ENCODE measurements at regions of chr16 and their contacts with region 1.

Region 1: GRCh38 chr16:2500918-2501750 is 12.6 kb upstream of the ATP6V0C start:
- DNase-seq: peak; percentile 85 to 87
- ATAC-seq: peak; percentile 81 to 93 (median 86)
- H3K4me3 ChIP-seq: peak overlapping the region in 5 of 10 donors; percentile 37 to 46 (median 40)
- H3K27ac ChIP-seq: peak overlapping the region in 4 of 10 donors; percentile 9 to 52 (median 26)
- H3K4me1 ChIP-seq: peaks cover 28 to 58% (median 46%) of the 10 kb centered on the region in 9 donors
- H3K27me3 ChIP-seq: no peaks in the 10 kb centered on the region
- CTCF ChIP-seq: peak; percentile 93 to 99 (median 99)

Region 2: GRCh38 chr16:2194852-2195321 is 306.2 kb before region 1 on chr16:
- intact Hi-C with region 1: loop called in 1 of 10 experiments (anchors 10 kb)
- DNase-seq: no peak
- ATAC-seq: peak in 6 of 8 donors; percentile 18 to 37 (median 31)
- H3K4me3 ChIP-seq: no peak overlapping the region
- H3K27ac ChIP-seq: no peak overlapping the region
- H3K4me1 ChIP-seq: peaks cover 4 to 15% (median 10%) of the 10 kb centered on the region in 9 donors
- H3K27me3 ChIP-seq: peaks cover 14 to 59% (median 39%) of the 10 kb centered on the region in 7 donors
- CTCF ChIP-seq: peak in 7 of 9 donors; percentile 15 to 38 (median 33)

Region 3: GRCh38 chr16:2236337-2237101 is 264.6 kb before region 1 on chr16 and contains the start of gene DNASE1L2:
- intact Hi-C with region 1: no loop called
- DNase-seq: no peak
- ATAC-seq: peak; percentile 15 to 51 (median 33)
- H3K4me3 ChIP-seq: peak within 1 kb of the TSS in 9 of 10 donors; percentile 7 to 49 (median 34)
- H3K27ac ChIP-seq: no peak within 1 kb of the TSS
- H3K4me1 ChIP-seq: peaks cover 13 to 29% (median 23%) of the 10 kb centered on the region in 9 donors
- H3K27me3 ChIP-seq: peaks cover 0 to 30% (median 8%) of the 10 kb centered on the region in 7 donors
- CTCF ChIP-seq: no peak
- total RNA-seq, gene DNASE1L2: 0.15 to 0.44 (median 0.30) TPM in 9 of 10 donors, not detected in the other

Region 4: GRCh38 chr16:2340564-2341455 is 160.3 kb before region 1 on chr16 and contains the start of gene ABCA3:
- intact Hi-C with region 1: loop called in 9 of 10 experiments (anchors 1 to 5 kb)
- DNase-seq: peak; percentile 90 to 96
- ATAC-seq: peak; percentile 95 to 99 (median 96)
- H3K4me3 ChIP-seq: peak within 1 kb of the TSS; percentile 69 to 91 (median 80)
- H3K27ac ChIP-seq: peak within 1 kb of the TSS in 9 of 10 donors; percentile 4 to 64 (median 52)
- H3K4me1 ChIP-seq: peaks cover 0 to 21% (median 15%) of the 10 kb centered on the region in 9 donors
- H3K27me3 ChIP-seq: peaks cover 0 to 34% (median 0%) of the 10 kb centered on the region in 7 donors
- CTCF ChIP-seq: peak; percentile 99 to 100 (median 100)
- total RNA-seq, gene ABCA3: 7.7 to 12.5 (median 9.4) TPM

Region 5: GRCh38 chr16:2459647-2460390 is 41.3 kb before region 1 on chr16 and contains the start of gene TEDC2:
- intact Hi-C with region 1: loop called in 1 of 10 experiments (anchors 5 kb)
- DNase-seq: peak; percentile 96 to 97
- ATAC-seq: peak; percentile 95 to 99 (median 99)
- H3K4me3 ChIP-seq: peak within 1 kb of the TSS in 9 of 10 donors; percentile 44 to 76 (median 63)
- H3K27ac ChIP-seq: peak within 1 kb of the TSS in 8 of 10 donors; percentile 24 to 72 (median 44)
- H3K4me1 ChIP-seq: peaks cover 5 to 16% (median 14%) of the 10 kb centered on the region in 9 donors
- H3K27me3 ChIP-seq: no peaks in the 10 kb centered on the region
- CTCF ChIP-seq: no peak
- total RNA-seq, gene TEDC2: 0.47 to 1.9 (median 0.95) TPM

Region 6: DNA sequence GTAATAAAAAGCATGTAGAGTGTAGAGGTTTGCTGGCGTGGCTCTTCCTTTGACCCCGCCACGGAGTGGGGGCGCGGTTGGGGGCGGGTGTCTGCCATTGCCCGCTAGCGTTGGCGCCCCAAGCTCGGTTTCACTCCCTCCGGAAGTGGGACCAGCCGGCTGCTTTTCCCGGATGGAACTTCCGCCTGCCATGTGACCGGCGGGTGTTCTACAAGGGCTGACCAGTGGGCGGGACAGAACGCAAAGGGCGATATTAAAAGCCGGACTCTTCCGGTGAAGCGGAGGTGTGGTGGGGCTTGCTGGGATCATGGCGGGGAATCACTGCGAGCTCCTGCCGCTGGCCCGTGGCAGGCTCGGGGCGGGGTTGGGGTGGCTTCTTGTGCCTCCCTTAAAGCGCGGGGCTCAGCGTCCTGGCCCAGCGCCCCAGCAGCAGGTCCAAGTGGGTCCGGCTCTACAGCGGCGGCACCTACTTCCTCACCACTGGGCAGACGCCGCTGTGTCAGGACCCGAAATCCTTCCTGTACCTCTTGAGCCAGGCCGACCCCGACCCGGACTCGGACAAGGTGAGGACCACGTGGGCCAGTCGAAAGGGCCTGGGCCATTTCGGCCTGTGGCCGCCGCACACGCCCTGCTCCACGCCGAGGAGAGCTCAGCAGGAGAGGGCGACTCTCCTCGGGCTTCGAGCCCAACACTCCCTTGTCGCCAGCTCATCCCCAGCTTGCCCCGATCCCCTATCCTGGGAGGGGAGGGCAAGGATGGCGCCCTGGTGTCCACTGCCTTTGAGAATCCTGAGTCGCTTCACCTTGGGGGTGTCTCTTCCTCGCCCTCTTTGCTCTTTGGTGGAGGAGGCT is 102.3 kb after region 1 on chr16:
- intact Hi-C with region 1: no loop called
- DNase-seq: peak; percentile 93 to 96
- ATAC-seq: peak; percentile 86 to 95 (median 94)
- H3K4me3 ChIP-seq: peak overlapping the region; percentile 45 to 96 (median 86)
- H3K27ac ChIP-seq: peak overlapping the region; percentile 51 to 89 (median 82)
- H3K4me1 ChIP-seq: peaks cover 0 to 30% (median 16%) of the 10 kb centered on the region in 9 donors
- H3K27me3 ChIP-seq: no peaks in the 10 kb centered on the region
- CTCF ChIP-seq: peak in 1 of 9 donors; percentile 8